ENCODE measurements at regions of chr10 and their contacts with region 1.

Region 1: DNA sequence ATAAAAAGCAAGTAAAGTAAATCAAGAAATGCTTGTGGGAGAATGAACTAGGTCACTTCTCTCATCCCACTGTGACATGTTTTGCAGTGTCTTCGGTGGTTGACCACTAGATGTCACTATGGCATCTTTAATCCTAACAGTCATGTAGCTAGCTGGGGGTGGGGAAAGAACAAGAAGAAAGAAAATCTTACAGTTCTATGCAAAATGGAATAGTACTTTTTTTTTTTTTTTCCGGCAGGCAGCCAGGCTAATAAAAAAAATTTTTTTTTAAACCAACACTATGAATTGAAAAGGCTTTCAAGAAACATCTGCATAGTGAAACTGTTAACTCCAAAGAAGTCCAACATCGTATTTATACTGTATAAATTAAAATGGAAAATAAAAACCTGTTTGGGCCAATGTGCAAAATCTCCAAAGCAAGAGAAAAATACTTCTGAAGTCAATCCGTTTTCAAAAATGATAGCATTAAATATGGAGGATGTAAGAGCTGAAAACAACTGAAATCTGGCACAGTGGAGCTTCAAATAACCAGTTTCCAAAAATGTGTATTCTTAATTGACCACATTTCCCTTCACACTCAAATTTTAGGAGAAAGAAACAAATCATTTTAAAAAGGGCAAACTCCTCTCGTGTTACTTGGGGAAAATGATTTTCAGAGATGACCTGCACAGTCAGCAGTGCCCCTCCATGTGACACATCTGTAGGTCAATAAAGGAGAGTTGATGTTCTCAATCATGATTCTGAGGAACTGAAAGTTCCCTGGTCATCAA is 38.5 kb downstream of the CDK1 start:
- DNase-seq: peak; percentile 82
- H3K4me3 Mint-ChIP-seq: no peak overlapping the region
- H3K27ac Mint-ChIP-seq: no peak overlapping the region
- H3K4me1 Mint-ChIP-seq: peaks cover 9% of the 10 kb centered on the region
- H3K27me3 Mint-ChIP-seq: peaks cover 13% of the 10 kb centered on the region

Region 2: GRCh38 chr10:60781661-60782060 is 35.2 kb before region 1 on chr10:
- intact Hi-C with region 1: no loop called
- DNase-seq: no peak
- H3K4me3 Mint-ChIP-seq: peak overlapping the region; percentile 82
- H3K27ac Mint-ChIP-seq: peak overlapping the region; percentile 72
- H3K4me1 Mint-ChIP-seq: peaks cover 60% of the 10 kb centered on the region
- H3K27me3 Mint-ChIP-seq: peaks cover 2% of the 10 kb centered on the region

Region 3: GRCh38 chr10:61284222-61284890 is 467.5 kb after region 1 on chr10:
- intact Hi-C with region 1: loop called (anchors 1 kb)
- DNase-seq: peak; percentile 63
- H3K4me3 Mint-ChIP-seq: no peak overlapping the region
- H3K27ac Mint-ChIP-seq: no peak overlapping the region
- H3K4me1 Mint-ChIP-seq: peaks cover 19% of the 10 kb centered on the region
- H3K27me3 Mint-ChIP-seq: peaks cover 13% of the 10 kb centered on the region

Region 4: DNA sequence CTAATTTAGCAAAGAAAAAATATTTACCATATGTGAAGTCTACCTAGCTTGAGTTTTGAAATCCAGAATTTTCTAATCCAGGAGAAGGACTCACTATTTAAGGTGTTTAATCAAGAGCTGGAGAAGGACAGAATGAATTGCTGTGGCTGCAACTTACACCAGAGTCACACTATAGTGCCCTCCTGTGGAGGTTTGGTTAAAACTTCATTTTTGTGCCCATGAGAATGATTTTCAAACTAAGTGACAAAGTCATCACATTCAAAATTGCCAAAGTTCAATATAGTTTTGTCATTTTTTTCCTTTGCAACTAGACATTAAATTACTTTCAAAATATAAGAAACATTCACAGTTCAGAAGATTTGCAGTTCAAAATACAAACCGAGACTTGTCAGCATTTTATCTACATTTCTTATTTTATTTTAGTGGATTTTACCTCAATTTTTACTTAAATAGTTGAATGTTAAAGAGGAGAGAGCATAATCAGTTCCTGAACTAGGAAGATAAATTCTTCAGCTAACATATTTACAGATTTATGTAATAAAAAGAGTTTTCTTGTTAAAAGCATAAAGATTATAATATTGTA is 916.6 kb after region 1 on chr10:
- intact Hi-C with region 1: loop called (anchors 5 kb)
- DNase-seq: peak; percentile 74
- H3K4me3 Mint-ChIP-seq: no peak overlapping the region
- H3K27ac Mint-ChIP-seq: no peak overlapping the region
- H3K4me1 Mint-ChIP-seq: no peaks in the 10 kb centered on the region
- H3K27me3 Mint-ChIP-seq: peaks cover 62% of the 10 kb centered on the region

Measured in activated CD4-positive, alpha-beta T cell treated with anti-CD3 and anti-CD28 coated beads, Interleukin-2, amount 10 ng/mL, durations not matched to agents 24 days and 14 days (primary cell).